Ascending aorta (tissue), 2 donors: ENCODE measurements at regions of chr1 and their contacts with region 1.

Region 1: GRCh38 chr1:233240829-233241682 is 54.5 kb downstream of the PCNX2 start:
- DNase-seq: peak in 1 of 2 donors; percentile 69
- H3K4me3 ChIP-seq: no peak overlapping the region
- H3K27ac ChIP-seq: no peak overlapping the region
- H3K4me1 ChIP-seq: no peaks in the 10 kb centered on the region
- H3K27me3 ChIP-seq: no peaks in the 10 kb centered on the region
- CTCF ChIP-seq: peak; percentile 38 to 74 (median 59)

Region 2: DNA sequence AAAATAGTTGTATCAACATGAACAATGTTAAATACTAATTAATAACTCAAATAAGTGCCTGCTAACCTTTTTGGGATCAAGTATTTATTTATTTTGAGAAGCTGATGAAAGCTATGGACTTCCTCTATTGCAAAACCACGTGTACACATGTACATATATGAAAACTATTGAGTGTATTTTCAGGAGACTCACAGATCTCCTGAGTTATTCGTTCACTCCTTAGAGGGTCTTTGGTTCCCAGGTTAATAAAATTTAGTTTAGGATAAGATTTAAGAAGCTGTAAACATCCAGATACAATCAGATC is 1484.0 kb before region 1 on chr1:
- intact Hi-C with region 1: loop called (anchors 10 kb)
- DNase-seq: no peak
- H3K4me3 ChIP-seq: no peak overlapping the region
- H3K27ac ChIP-seq: no peak overlapping the region
- H3K4me1 ChIP-seq: no peaks in the 10 kb centered on the region
- H3K27me3 ChIP-seq: no peaks in the 10 kb centered on the region
- CTCF ChIP-seq: no peak

Region 3: GRCh38 chr1:232635778-232636356 is 605.2 kb before region 1 on chr1:
- intact Hi-C with region 1: loop called (anchors 5 kb)
- DNase-seq: no peak
- H3K4me3 ChIP-seq: no peak overlapping the region
- H3K27ac ChIP-seq: no peak overlapping the region
- H3K4me1 ChIP-seq: no peaks in the 10 kb centered on the region
- H3K27me3 ChIP-seq: no peaks in the 10 kb centered on the region
- CTCF ChIP-seq: peak; percentile 44 to 75 (median 70)

Region 4: GRCh38 chr1:233229288-233229687 is 11.8 kb before region 1 on chr1:
- intact Hi-C with region 1: no loop called
- DNase-seq: no peak
- H3K4me3 ChIP-seq: no peak overlapping the region
- H3K27ac ChIP-seq: no peak overlapping the region
- H3K4me1 ChIP-seq: no peaks in the 10 kb centered on the region
- H3K27me3 ChIP-seq: no peaks in the 10 kb centered on the region
- CTCF ChIP-seq: no peak